Activated T-helper 2 cell treated with anti-CD3 and anti-CD28 coated beads, Interferon-gamma antibody, Interleukin-2, Interleukin-4, amounts not matched to agents 10 μg/mL and 5 μg/mL and 100 μg/mL, durations not matched to agents 14 hours and 24 hours and 36 hours (primary cell): ENCODE measurements at regions of chr11 and their contacts with region 1.

Region 1: GRCh38 chr11:73982969-73983740 is 512 bp upstream of the UCP2 start:
- DNase-seq: peak; percentile 94
- H3K4me3 Mint-ChIP-seq: peak overlapping the region; percentile 100
- H3K27ac Mint-ChIP-seq: peak overlapping the region; percentile 97
- H3K4me1 Mint-ChIP-seq: peaks cover 39% of the 10 kb centered on the region
- H3K27me3 Mint-ChIP-seq: no peaks in the 10 kb centered on the region

Region 2: DNA sequence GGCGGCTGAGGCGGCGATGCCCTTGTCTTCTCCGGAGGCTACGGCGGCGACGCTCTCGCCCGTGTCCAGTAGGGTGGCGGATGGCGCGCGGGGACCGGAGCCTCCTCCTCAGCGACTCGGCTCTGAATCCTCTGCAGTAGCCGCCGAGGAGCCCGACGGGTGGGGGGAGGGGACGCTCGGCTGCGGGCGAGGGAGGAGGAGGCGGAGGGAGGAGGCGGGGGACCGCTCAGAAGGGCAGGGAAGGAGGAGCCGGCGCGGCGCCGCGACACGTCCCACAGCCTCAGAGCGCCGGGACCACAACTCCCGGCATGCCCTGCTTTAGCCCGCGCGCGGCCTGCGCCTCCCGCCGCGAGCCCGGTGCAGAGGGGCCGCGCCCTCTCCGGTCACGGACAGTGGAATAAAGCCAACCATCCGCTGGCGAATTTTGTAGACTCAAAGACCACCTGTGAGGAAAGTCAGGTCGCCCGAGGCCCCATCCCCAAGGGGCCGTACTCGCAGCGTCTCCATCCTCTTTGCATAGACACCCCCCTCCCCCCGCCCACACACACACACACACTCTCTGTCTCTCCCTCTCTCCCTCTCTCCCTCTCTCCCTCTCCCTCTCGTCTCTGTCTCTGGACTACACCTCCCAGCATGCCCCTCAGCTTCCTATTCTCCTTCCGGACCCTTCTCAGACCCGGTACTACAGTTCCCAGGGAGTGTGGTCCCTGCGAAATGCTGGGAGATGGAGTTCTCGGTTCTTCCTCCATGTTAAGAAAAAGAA is 385.0 kb before region 1 on chr11 and contains the start of gene FAM168A:
- intact Hi-C with region 1: no loop called
- DNase-seq: peak; percentile 89
- H3K4me3 Mint-ChIP-seq: peak within 1 kb of the TSS; percentile 95
- H3K27ac Mint-ChIP-seq: peak within 1 kb of the TSS; percentile 89
- H3K4me1 Mint-ChIP-seq: peaks cover 29% of the 10 kb centered on the region
- H3K27me3 Mint-ChIP-seq: no peaks in the 10 kb centered on the region
- total RNA-seq, gene FAM168A: 19.2 and 19.3 TPM in 2 replicates

Region 3: DNA sequence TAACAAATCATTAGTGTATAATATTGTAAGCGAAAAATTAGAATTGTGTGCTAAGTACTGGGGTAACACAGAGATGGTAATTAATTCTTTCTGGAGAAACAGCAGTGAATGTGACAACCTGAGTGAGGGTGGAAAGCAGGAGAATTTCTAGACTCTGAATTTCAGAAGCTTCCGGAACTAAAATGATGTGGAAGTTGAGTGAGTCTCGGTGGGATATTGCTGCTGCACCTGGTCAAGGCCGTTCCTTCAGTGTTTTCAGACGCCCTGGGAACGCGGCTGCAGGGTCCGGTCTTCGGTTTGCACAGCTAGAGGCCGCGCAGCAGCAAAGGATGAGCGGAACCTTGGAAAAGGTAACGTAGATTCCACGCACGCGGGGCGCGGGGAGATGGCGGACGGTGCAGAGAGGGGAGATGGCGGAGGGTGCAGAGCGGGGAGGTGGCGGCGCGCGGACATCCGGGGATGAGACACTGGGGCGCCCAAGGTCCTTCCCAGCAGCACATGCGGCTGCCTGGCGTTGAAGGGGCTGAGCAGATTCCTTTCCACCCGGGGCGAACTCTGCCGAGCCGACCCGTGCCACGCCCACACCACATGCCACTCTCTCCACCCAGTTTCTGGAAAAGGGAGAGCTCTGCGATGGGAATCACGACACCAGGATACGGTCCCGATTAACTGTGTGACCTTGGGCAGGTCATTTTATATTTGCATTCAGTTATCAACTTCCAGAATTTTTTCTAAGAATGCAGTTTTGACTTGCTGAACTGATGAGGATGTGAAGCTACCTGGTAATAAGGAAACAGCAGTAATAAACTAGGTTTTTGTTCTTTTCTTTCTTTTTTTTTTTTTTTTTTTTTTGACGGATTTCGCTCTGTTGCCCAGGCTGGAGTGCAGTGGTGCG is 195.3 kb before region 1 on chr11 and contains the start of gene MRPL48:
- intact Hi-C with region 1: loop called (anchors 5 kb)
- DNase-seq: peak; percentile 87
- H3K4me3 Mint-ChIP-seq: peak within 1 kb of the TSS; percentile 98
- H3K27ac Mint-ChIP-seq: peak within 1 kb of the TSS; percentile 98
- H3K4me1 Mint-ChIP-seq: peaks cover 17% of the 10 kb centered on the region
- H3K27me3 Mint-ChIP-seq: no peaks in the 10 kb centered on the region
- total RNA-seq, gene MRPL48: 63.1 and 67.1 TPM in 2 replicates

Region 4: DNA sequence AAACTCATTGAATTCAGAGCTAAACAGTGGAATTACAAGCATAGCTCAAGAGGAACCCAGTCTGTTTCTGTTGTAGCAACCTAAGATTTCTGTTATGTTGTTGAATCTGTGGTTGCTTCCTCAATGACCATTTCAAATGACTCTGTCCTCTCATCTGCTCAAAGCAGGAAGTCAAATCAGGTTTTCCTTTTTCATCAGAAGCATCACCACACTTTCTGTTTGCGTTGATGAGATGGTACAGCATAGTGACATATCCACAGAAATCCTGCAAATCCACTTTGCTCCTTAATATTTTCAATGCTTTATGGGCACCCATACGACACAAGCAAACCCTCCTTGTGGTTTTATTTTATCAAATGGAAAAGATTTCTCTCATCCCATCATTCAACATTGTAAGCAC is 12.1 kb after region 1 on chr11:
- intact Hi-C with region 1: loop called (anchors 1 kb)
- DNase-seq: no peak
- H3K4me3 Mint-ChIP-seq: peak overlapping the region; percentile 37
- H3K27ac Mint-ChIP-seq: peak overlapping the region; percentile 96
- H3K4me1 Mint-ChIP-seq: peaks cover 45% of the 10 kb centered on the region
- H3K27me3 Mint-ChIP-seq: no peaks in the 10 kb centered on the region

Region 5: DNA sequence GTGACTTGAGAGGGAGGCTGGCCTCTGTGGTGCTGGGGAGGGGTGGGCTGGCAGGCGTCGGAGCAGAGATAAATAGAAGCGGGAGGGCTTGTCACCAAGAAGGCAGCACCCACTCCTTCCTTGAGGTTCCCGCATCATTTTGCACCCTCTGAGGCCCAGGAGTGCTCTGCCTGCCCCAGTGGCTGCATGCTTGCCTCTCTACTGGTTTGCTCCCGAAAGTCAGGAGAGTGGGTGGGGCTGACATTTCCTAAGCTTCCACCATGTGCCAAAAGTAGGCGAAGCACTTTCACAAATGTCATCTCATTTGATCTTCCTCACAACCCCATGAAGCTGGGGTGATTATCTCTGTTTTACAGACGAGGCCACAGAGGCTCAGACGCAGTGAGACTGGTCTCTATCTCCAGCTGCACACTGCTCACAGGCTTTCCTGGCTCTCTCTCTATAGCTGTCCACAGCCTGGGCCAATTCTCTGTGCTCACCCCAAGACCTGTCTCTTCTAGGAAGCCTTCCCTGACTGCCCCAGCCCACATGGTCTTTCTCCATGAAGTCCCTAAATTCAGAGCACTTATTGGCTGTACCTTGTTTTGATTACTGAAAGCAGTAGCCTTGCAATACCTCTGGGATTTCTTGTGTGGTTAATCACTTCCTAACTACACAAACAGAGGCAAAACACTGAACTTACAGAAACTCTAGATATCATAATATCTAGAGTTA is 28.4 kb after region 1 on chr11:
- intact Hi-C with region 1: loop called (anchors 1 kb)
- DNase-seq: peak; percentile 52
- H3K4me3 Mint-ChIP-seq: peak overlapping the region; percentile 7
- H3K27ac Mint-ChIP-seq: peak overlapping the region; percentile 99
- H3K4me1 Mint-ChIP-seq: peaks cover 78% of the 10 kb centered on the region
- H3K27me3 Mint-ChIP-seq: no peaks in the 10 kb centered on the region

Region 6: GRCh38 chr11:74018331-74019005 is 35.3 kb after region 1 on chr11:
- intact Hi-C with region 1: loop called (anchors 2 kb)
- DNase-seq: no peak
- H3K4me3 Mint-ChIP-seq: no peak overlapping the region
- H3K27ac Mint-ChIP-seq: no peak overlapping the region
- H3K4me1 Mint-ChIP-seq: peaks cover 44% of the 10 kb centered on the region
- H3K27me3 Mint-ChIP-seq: no peaks in the 10 kb centered on the region

Region 7: DNA sequence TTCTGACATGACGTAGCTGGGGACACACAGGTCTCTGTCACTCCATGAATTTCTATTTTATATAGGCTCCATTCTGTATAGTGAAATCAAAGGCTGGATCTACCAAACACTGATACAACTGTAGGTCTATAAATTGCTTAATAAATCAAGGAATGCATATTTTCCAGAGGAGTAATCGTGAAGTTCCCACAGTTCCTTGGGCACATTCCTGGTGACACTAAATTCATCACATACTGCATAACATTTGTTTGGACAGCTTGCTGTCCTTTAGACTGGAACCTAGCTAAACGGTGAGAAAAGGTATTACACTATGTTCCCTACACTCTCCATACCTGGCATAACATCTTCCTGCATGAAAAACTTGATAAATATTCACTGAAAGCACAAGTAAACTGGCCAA is 67.3 kb after region 1 on chr11:
- intact Hi-C with region 1: no loop called
- DNase-seq: no peak
- H3K4me3 Mint-ChIP-seq: no peak overlapping the region
- H3K27ac Mint-ChIP-seq: no peak overlapping the region
- H3K4me1 Mint-ChIP-seq: no peaks in the 10 kb centered on the region
- H3K27me3 Mint-ChIP-seq: no peaks in the 10 kb centered on the region

Region 8: DNA sequence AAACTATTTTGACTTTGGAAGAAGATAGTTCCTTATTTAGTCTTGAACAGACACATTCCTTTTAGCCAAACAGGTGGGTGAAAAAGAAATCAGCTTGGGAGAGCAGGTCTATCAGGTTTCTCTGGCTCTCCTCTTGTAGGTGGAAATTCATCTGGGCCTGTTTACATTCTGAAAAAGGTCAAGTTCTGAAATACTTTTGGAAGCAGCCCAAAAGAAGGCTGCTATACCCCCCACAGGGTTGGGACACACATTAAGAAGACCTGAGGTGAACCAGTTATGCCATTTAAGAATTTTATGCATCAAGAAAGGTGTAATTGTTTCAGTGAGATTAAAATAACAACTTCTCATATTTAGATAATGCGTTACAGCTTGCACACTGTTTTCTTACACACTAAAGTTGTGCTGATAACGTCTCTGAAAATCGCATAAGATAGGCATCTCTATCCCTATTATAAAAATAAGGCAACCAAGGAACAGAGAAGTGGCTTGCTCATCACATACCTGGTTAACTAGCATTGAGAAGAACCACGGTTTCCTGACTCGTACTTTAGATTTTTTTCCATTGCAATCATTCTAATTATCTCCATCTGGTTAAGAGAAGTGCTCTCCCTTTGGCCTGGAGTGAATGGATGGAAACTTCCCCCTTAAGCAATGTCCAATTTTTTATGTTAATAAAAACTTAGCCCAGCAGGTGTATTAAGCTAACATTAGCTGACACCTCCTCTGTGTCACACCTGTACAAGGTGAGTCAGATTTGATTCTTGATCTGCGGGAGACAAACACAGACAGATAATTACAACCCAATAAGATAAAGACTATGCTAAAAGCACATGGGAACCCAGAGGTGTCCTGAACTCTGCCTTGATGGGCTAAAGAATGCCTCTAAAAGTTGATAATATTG is 86.2 kb after region 1 on chr11:
- intact Hi-C with region 1: no loop called
- DNase-seq: no peak
- H3K4me3 Mint-ChIP-seq: no peak overlapping the region
- H3K27ac Mint-ChIP-seq: no peak overlapping the region
- H3K4me1 Mint-ChIP-seq: peaks cover 7% of the 10 kb centered on the region
- H3K27me3 Mint-ChIP-seq: no peaks in the 10 kb centered on the region

Region 9: GRCh38 chr11:74094400-74094799 is 111.2 kb after region 1 on chr11:
- intact Hi-C with region 1: no loop called
- DNase-seq: no peak
- H3K4me3 Mint-ChIP-seq: no peak overlapping the region
- H3K27ac Mint-ChIP-seq: no peak overlapping the region
- H3K4me1 Mint-ChIP-seq: peaks cover 2% of the 10 kb centered on the region
- H3K27me3 Mint-ChIP-seq: no peaks in the 10 kb centered on the region